Vagina (tissue), 2 donors: ENCODE measurements at regions of chr2 and their contacts with region 1.

Region 1: DNA sequence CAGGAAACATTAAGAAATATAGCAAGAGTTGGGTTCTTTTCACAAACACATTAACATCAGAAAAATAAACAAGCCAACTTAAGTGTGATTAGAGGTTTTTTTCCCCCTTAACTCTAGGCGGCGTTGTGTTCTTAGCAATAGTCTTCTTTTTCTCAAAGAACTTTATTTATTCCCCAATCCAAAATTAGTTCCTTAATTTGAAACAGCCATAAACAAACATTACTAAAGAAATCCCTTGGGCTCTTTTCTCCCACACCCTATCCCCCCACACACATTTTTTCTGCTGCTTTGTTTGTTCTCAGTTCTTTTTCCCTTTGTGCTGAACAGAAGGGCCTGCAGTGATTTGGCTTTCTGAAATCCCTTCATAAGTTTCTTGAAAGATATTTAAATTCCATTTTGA is 13.2 kb upstream of the MYO1B start:
- DNase-seq: no peak
- H3K4me3 ChIP-seq: no peak overlapping the region
- H3K27ac ChIP-seq: peak overlapping the region; percentile 58
- H3K4me1 ChIP-seq: peaks cover 8% of the 10 kb centered on the region
- H3K27me3 ChIP-seq: no peaks in the 10 kb centered on the region
- CTCF ChIP-seq: peak in 2 of 3 experiments; percentile 29 to 38
- POLR2A ChIP-seq: no peak

Region 2: DNA sequence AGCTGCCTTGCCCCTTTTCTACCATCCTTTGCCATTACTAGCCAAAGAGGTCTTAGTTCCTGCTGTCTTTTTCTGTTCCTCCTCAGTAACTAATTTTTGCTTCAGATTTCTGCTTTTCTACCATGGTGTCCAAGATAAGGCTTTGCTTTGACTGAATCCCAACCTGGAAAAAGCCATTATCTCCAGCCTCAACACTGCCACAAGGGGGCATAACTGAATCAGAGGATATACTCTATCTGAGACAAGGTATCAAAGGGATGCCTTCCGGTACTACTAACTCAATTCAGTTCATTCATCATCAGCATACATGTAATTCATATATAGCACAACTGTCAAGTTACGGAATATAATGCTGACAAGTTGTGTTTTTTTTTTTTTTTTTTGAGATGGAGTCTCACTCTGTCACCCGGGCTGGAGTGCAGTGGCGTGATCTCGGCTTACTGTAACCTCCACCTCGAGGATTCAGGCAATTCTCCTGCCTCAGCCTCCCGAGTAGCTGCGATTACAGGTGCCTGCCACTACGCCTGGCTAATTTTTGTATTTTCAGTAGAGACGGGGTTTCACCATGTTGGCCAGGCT is 1480.8 kb before region 1 on chr2:
- intact Hi-C with region 1: no loop called
- DNase-seq: no peak
- H3K4me3 ChIP-seq: no peak overlapping the region
- H3K27ac ChIP-seq: no peak overlapping the region
- H3K4me1 ChIP-seq: no peaks in the 10 kb centered on the region
- H3K27me3 ChIP-seq: no peaks in the 10 kb centered on the region
- CTCF ChIP-seq: peak in 2 of 3 experiments; percentile 25 to 36
- POLR2A ChIP-seq: no peak

Region 3: DNA sequence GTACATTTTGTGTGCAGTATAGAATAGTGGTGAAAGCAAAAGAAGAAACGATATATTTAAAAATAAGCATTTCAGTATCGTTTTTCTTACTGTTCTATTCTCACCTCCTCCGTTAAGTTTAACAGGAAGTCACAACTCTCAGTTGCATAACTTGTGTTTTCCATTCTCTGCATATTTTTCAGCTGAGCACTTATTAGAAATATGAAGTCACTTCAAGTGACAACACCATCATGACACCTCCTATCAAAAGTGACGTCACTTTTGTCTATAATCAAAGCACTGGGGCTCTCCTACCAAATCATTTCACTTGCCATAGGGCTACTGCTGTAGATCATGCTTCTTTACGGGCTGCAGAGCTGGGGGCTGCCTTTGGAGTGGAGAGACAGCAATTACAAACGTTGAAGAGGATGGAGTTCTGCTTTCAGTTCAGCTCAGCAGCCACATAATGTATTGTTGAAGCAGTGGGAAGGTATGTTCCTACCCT is 117.5 kb before region 1 on chr2:
- intact Hi-C with region 1: no loop called
- DNase-seq: no peak
- H3K4me3 ChIP-seq: no peak overlapping the region
- H3K27ac ChIP-seq: no peak overlapping the region
- H3K4me1 ChIP-seq: no peaks in the 10 kb centered on the region
- H3K27me3 ChIP-seq: no peaks in the 10 kb centered on the region
- CTCF ChIP-seq: no peak
- POLR2A ChIP-seq: no peak

Region 4: DNA sequence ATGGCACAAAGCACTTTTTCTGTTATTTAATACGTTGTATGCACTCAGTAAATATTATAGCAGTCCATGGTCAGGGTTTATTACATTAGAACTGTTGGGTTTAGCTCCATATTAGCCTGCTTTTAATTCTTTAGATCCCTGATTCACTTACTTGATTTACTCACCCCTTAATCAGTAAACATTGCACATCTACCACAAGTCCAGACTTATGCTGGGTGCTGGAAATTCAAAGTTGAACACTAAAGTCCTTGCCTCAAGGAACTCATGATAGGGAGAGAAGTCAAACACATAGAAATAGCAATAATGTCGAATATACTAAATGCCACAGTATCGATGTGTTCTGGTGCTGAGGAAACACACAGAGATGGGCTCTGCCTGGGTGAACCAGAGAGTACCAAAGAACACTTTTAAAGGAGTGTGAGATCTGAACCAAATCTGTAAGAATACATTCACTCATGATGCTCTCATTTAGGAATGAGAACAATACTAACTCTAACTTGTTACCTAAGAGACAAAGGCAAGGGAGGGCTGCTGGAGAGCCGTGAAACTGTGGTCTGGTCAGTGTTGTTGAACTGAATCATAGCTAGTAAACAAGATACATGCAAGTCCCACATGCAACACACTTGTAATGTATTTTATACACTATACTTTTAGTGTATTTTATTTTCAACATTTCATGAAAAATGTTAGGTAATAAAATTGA is 86.1 kb before region 1 on chr2:
- intact Hi-C with region 1: no loop called
- DNase-seq: no peak
- H3K4me3 ChIP-seq: no peak overlapping the region
- H3K27ac ChIP-seq: no peak overlapping the region
- H3K4me1 ChIP-seq: peaks cover 6% of the 10 kb centered on the region
- H3K27me3 ChIP-seq: no peaks in the 10 kb centered on the region
- CTCF ChIP-seq: no peak
- POLR2A ChIP-seq: no peak

Region 5: DNA sequence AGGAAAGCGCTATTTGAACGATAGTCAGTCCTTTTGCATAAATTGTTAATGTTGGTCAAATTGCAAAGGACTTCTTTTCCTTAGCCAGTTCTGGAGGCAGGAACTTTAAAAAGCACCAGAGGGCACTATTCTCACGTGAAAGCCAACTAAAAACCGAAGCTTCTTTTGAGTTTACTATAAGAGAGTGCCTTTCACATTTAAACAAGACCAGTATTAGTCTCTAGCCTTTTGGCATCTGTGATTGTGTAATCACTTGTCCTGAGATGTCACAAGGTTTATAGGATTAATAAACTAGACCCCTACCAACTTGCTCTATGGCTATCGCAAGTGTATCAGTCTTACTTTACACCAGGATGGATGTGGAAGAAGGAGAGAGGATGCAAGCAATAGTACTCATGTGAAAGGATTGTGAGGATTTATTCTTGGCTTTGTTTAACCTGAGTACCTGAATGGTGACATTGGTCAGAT is 66.8 kb before region 1 on chr2:
- intact Hi-C with region 1: loop called (anchors 5 kb)
- DNase-seq: no peak
- H3K4me3 ChIP-seq: no peak overlapping the region
- H3K27ac ChIP-seq: no peak overlapping the region
- H3K4me1 ChIP-seq: peaks cover 20% of the 10 kb centered on the region
- H3K27me3 ChIP-seq: no peaks in the 10 kb centered on the region
- CTCF ChIP-seq: peak; percentile 28 to 73 (median 60)
- POLR2A ChIP-seq: no peak

Region 6: GRCh38 chr2:191501561-191502168 is 269.7 kb after region 1 on chr2:
- intact Hi-C with region 1: loop called (anchors 5 kb)
- DNase-seq: no peak
- H3K4me3 ChIP-seq: no peak overlapping the region
- H3K27ac ChIP-seq: peak overlapping the region; percentile 16
- H3K4me1 ChIP-seq: peaks cover 13% of the 10 kb centered on the region
- H3K27me3 ChIP-seq: no peaks in the 10 kb centered on the region
- CTCF ChIP-seq: peak in 2 of 3 experiments; percentile 45 to 50
- POLR2A ChIP-seq: no peak